ENCODE measurements at regions of chr2 and their contacts with region 1.

Region 1: GRCh38 chr2:56313500-56313921 is 129.7 kb downstream of the CCDC85A start:
- DNase-seq: no peak
- ATAC-seq: no peak
- H3K4me3 ChIP-seq: no peak overlapping the region
- H3K27ac ChIP-seq: peak overlapping the region in 9 of 10 donors; percentile 26 to 82 (median 46)
- H3K4me1 ChIP-seq: peaks cover 0 to 51% (median 12%) of the 10 kb centered on the region in 9 donors
- H3K27me3 ChIP-seq: no peaks in the 10 kb centered on the region
- CTCF ChIP-seq: no peak

Region 2: DNA sequence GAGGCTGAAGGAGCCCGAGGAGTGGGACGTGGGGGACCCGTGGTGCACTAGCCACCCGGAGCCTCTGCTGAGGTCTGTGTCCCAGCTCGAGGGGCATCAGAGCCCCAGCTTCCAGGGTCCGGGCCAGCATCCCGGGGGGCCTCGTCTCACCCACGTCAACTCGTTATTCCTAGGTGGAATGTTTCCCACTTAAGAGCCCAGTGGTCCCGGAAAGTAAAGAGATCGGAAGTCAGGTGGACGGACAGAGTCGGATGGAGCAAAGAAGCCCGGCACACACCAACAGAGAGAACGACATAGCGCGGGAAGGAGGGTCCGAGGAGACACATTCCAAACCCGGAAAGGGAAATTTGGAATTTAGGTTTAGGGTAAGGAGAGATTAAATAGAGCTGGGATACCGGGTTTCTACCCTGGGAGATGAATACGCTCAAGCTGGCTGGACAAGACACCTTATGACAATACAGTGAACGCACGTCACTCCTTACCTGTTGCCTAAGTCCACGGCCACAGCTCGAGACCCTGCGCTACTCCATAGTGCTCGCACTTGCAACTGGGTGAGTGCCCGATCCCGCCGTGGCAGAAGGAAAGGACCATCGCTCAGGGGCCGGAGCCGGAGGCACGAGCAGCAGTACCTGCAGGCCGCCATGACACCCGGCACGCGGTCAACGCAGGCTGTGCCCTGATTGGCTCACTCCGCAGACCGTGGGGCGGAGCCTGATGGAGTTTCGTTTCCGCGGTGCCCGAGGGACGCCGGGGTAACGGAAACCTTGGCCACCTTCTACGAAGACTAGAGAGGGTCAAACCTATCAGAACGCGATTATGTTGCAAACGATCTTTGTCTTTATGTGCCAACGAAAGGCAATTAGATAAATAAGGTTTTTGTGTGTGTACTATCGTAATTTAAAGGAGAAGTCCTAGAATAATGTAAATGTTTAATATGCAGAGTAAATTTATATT is 620.1 kb before region 1 on chr2 and contains the start of gene PNPT1:
- intact Hi-C with region 1: loop called in 1 of 10 experiments (anchors 5 kb)
- DNase-seq: peak; percentile 93 to 95
- ATAC-seq: peak; percentile 100
- H3K4me3 ChIP-seq: peak within 1 kb of the TSS; percentile 57 to 90 (median 86)
- H3K27ac ChIP-seq: peak within 1 kb of the TSS in 9 of 10 donors; percentile 7 to 76 (median 51)
- H3K4me1 ChIP-seq: peaks cover 0 to 16% (median 11%) of the 10 kb centered on the region in 9 donors
- H3K27me3 ChIP-seq: peaks cover 0 to 6% (median 0%) of the 10 kb centered on the region in 7 donors
- CTCF ChIP-seq: no peak
- total RNA-seq, gene PNPT1: 19.6 to 29.1 (median 24.6) TPM

Region 3: DNA sequence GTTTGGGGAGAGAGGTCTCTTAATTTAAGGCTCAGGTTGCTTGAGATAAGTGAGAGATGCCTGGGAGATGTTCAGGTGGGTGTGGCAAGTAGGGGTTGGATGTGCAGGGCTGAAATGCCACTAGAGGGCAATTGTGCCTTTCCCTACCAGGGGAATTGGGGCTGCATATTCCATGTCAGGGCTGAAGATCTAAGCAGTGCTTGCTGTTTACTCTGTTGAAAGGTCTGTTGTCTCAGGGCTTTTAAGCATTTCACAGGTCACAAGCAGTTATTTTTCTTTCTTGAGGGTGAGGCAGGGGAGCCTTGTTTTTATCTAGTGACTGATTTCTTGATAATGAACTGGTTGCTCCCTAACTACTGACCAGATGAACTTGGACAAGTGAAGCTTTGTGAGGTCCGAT is 121.8 kb before region 1 on chr2:
- intact Hi-C with region 1: loop called in 2 of 10 experiments (anchors 10 kb)
- DNase-seq: peak in 1 of 2 donors; percentile 24
- ATAC-seq: peak in 7 of 8 donors; percentile 44 to 87 (median 80)
- H3K4me3 ChIP-seq: no peak overlapping the region
- H3K27ac ChIP-seq: no peak overlapping the region
- H3K4me1 ChIP-seq: peaks cover 0 to 52% (median 0%) of the 10 kb centered on the region in 9 donors
- H3K27me3 ChIP-seq: peaks cover 0 to 16% (median 0%) of the 10 kb centered on the region in 7 donors
- CTCF ChIP-seq: peak; percentile 26 to 70 (median 58)

Region 4: GRCh38 chr2:56288838-56289580 is 24.5 kb before region 1 on chr2:
- intact Hi-C with region 1: no loop called
- DNase-seq: no peak
- ATAC-seq: peak in 3 of 8 donors; percentile 33 to 54 (median 47)
- H3K4me3 ChIP-seq: no peak overlapping the region
- H3K27ac ChIP-seq: peak overlapping the region in 1 of 10 donors; percentile 3
- H3K4me1 ChIP-seq: peaks cover 0 to 29% (median 0%) of the 10 kb centered on the region in 9 donors
- H3K27me3 ChIP-seq: no peaks in the 10 kb centered on the region
- CTCF ChIP-seq: peak in 7 of 9 donors; percentile 20 to 57 (median 34)

Region 5: DNA sequence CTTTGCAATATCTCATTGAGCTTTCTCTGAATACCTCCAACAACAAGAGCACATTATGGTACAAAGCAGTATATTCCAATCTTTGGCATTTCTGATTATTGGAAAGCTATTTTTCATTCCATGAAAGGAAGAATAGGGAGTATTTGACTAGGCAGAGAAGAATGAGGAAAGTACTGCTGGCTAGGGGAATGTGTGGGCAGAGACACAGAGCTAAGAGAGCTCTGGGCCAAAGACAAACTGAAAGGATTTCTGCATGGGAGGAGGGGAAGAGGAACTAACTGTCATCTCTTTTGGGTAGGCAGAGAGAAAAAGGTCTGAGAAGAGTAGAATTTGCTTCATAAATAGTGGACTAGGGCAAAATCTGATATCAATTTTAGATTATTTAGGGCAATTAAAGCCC is 21.1 kb after region 1 on chr2:
- intact Hi-C with region 1: loop called in 1 of 10 experiments (anchors 2 kb)
- DNase-seq: no peak
- ATAC-seq: peak in 5 of 8 donors; percentile 38 to 79 (median 52)
- H3K4me3 ChIP-seq: no peak overlapping the region
- H3K27ac ChIP-seq: peak overlapping the region in 7 of 10 donors; percentile 4 to 71 (median 46)
- H3K4me1 ChIP-seq: peaks cover 0 to 46% (median 25%) of the 10 kb centered on the region in 9 donors
- H3K27me3 ChIP-seq: no peaks in the 10 kb centered on the region
- CTCF ChIP-seq: no peak

Region 6: GRCh38 chr2:56580242-56580641 is 266.7 kb after region 1 on chr2:
- intact Hi-C with region 1: loop called in 1 of 10 experiments (anchors 10 kb)
- DNase-seq: no peak
- ATAC-seq: no peak
- H3K4me3 ChIP-seq: no peak overlapping the region
- H3K27ac ChIP-seq: no peak overlapping the region
- H3K4me1 ChIP-seq: no peaks in the 10 kb centered on the region
- H3K27me3 ChIP-seq: no peaks in the 10 kb centered on the region
- CTCF ChIP-seq: no peak

Measured in heart right ventricle (tissue), 16 donors.